ENCODE measurements at regions of chr15 and their contacts with region 1.

Region 1: DNA sequence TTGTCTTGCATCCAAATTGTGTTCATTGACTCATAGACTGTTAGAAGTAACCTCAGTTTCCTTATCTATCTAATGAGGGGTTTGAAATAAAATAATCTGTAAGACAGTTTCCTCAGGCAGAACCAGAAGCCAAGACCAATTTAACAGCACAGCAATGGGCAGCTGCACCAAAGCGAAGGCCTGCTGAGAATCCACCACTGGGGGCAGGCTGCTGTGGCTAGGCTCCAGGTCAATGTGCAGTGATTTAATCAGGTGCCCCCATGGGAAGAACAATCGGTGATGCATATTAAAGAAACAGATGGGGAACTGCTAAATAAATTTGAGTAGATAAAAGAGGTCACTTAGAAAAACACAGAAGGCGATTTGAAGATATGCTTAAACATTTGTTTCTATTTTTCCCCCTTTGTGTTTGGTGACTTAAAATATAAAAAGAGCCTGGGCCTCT is 28.0 kb upstream of the TMOD3 start:
- DNase-seq: peak; percentile 62 to 69
- ATAC-seq: peak; percentile 77 to 90; a peak in 5 of 6 replicates
- H3K4me3 ChIP-seq: no peak overlapping the region
- H3K27ac ChIP-seq: peak overlapping the region in 1 of 2 experiments; percentile 30; a peak in 1 of 6 replicates
- H3K4me1 ChIP-seq: peaks cover 46% of the 10 kb centered on the region
- CTCF ChIP-seq: peak; percentile 62
- EP300 ChIP-seq: no peak
- POLR2A ChIP-seq: no peak
- RAD21 ChIP-seq: peak; percentile 33 to 49; a peak in 3 of 5 replicates

Region 2: DNA sequence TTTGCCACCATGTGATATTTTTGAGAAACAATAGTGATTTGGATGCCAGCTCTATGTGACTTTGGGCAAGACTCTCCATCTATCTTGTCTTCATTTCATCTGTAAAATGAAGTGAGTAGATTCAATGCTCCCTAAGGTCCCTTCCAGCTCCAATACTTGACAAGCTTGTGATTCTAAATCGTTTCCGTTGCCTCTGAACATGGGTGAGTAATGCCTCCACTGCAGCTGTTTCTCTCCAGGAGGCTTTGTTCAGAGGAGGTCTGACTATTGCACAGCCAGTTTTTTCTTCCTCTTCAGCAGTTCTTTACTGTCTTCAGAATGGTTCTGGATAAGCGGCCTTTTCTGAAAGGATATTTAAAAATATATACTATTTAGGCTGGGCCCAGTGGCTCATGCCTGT is 13.2 kb after region 1 on chr15:
- CTCF ChIA-PET with region 1: interaction called, 10 read pairs
- POLR2A ChIA-PET with region 1: no interaction called
- DNase-seq: no peak
- ATAC-seq: no peak
- H3K4me3 ChIP-seq: no peak overlapping the region
- H3K27ac ChIP-seq: no peak overlapping the region
- H3K4me1 ChIP-seq: no peaks in the 10 kb centered on the region
- CTCF ChIP-seq: no peak
- EP300 ChIP-seq: no peak
- POLR2A ChIP-seq: no peak
- RAD21 ChIP-seq: no peak